PC-9 (cell line): ENCODE measurements at regions of chr1 and their contacts with region 1.

Region 1: GRCh38 chr1:244302889-244303613 is 148.7 kb downstream of the ADSS2 start:
- DNase-seq: peak; percentile 84 to 92
- H3K4me3 ChIP-seq: no peak overlapping the region
- H3K27ac ChIP-seq: peak overlapping the region; percentile 69
- H3K4me1 ChIP-seq: peaks cover 39% of the 10 kb centered on the region
- H3K27me3 ChIP-seq: no peaks in the 10 kb centered on the region
- CTCF ChIP-seq: no peak

Region 2: GRCh38 chr1:243343970-243344937 is 958.8 kb before region 1 on chr1:
- CTCF ChIA-PET with region 1: interaction called, 7 read pairs
- POLR2A ChIA-PET with region 1: no interaction called
- intact Hi-C with region 1: loop called (anchors 1 kb)
- DNase-seq: peak in 1 of 2 experiments; percentile 48
- H3K4me3 ChIP-seq: no peak overlapping the region
- H3K27ac ChIP-seq: no peak overlapping the region
- H3K4me1 ChIP-seq: no peaks in the 10 kb centered on the region
- H3K27me3 ChIP-seq: no peaks in the 10 kb centered on the region
- CTCF ChIP-seq: peak; percentile 87

Region 3: DNA sequence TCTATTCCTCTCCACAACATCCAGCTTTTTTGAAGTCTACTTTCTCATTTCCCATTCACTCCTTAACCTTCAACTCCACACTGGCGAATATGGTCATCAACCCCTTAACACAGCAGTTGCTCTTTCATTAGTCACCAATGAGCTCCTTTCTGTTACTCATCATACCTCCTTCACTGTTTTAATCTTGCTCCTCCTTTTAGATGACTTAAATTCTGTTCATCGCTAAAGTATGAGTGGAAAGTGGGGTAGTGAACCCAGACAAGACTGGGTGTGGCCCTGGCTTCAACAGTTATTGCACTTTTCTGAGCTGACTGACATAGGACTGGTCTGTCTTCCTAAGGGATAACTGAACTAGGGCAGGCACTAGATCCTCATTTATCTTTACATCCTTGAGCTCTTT is 504.3 kb before region 1 on chr1:
- CTCF ChIA-PET with region 1: no interaction called
- POLR2A ChIA-PET with region 1: no interaction called
- intact Hi-C with region 1: no loop called
- DNase-seq: peak; percentile 31 to 47
- H3K4me3 ChIP-seq: no peak overlapping the region
- H3K27ac ChIP-seq: peak overlapping the region; percentile 20
- H3K4me1 ChIP-seq: peaks cover 14% of the 10 kb centered on the region
- H3K27me3 ChIP-seq: no peaks in the 10 kb centered on the region
- CTCF ChIP-seq: no peak

Region 4: GRCh38 chr1:244265507-244265906 is 37.5 kb before region 1 on chr1:
- CTCF ChIA-PET with region 1: no interaction called
- POLR2A ChIA-PET with region 1: no interaction called
- intact Hi-C with region 1: no loop called
- DNase-seq: no peak
- H3K4me3 ChIP-seq: no peak overlapping the region
- H3K27ac ChIP-seq: no peak overlapping the region
- H3K4me1 ChIP-seq: no peaks in the 10 kb centered on the region
- H3K27me3 ChIP-seq: no peaks in the 10 kb centered on the region
- CTCF ChIP-seq: no peak

Region 5: DNA sequence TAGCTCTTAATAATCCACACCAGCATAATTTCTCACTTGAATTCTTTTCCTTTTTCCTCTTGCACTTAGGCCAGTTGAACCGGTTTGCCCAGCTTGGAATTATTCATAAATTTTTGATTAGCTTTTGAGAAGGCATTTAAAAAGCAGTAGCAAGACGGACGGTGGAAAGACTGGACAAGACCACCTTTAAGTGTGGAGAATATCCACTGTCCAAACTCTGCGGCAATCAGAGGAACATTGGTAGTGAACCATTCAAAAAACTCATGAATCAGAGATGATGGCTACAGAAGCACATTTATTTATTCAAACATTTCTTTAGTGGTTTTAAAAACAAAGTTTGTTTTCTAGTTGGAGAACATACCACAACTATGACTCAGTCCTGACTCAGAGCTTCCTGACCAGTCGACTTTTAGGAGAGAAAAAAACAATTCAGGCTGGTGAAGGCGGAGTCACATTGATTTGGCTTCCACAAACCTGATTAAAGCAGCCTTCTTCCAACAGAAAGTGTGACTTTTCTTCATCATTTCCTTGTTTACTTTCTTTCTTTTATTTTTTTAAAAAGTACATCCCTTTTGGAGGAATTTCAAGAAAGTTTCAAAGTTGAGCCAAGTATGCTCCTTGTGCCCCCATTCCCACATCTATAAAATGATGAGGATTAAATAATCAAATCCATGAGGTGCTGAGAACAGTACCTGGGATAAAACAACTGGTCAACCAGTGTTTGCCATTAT is 19.9 kb after region 1 on chr1:
- CTCF ChIA-PET with region 1: no interaction called
- POLR2A ChIA-PET with region 1: interaction called, 12 read pairs
- intact Hi-C with region 1: loop called (anchors 1 kb)
- DNase-seq: peak; percentile 68 to 96
- H3K4me3 ChIP-seq: peak overlapping the region; percentile 52
- H3K27ac ChIP-seq: peak overlapping the region; percentile 96
- H3K4me1 ChIP-seq: peaks cover 45% of the 10 kb centered on the region
- H3K27me3 ChIP-seq: no peaks in the 10 kb centered on the region
- CTCF ChIP-seq: no peak

Region 6: GRCh38 chr1:244353551-244354091 is 50.6 kb after region 1 on chr1:
- CTCF ChIA-PET with region 1: no interaction called
- POLR2A ChIA-PET with region 1: no interaction called
- intact Hi-C with region 1: loop called (anchors 5 kb)
- DNase-seq: peak; percentile 73 to 91
- H3K4me3 ChIP-seq: no peak overlapping the region
- H3K27ac ChIP-seq: peak overlapping the region; percentile 78
- H3K4me1 ChIP-seq: peaks cover 16% of the 10 kb centered on the region
- H3K27me3 ChIP-seq: no peaks in the 10 kb centered on the region
- CTCF ChIP-seq: no peak

Region 7: GRCh38 chr1:244391761-244392160 is 88.7 kb after region 1 on chr1:
- CTCF ChIA-PET with region 1: interaction called, 7 read pairs
- POLR2A ChIA-PET with region 1: no interaction called
- intact Hi-C with region 1: loop called (anchors 5 kb)
- DNase-seq: peak; percentile 35 to 76
- H3K4me3 ChIP-seq: no peak overlapping the region
- H3K27ac ChIP-seq: peak overlapping the region; percentile 45; the same call in 1 of the 2 replicates
- H3K4me1 ChIP-seq: peaks cover 14% of the 10 kb centered on the region
- H3K27me3 ChIP-seq: no peaks in the 10 kb centered on the region
- CTCF ChIP-seq: no peak

Region 8: GRCh38 chr1:244414543-244414942 is 111.5 kb after region 1 on chr1:
- CTCF ChIA-PET with region 1: interaction called, 14 read pairs
- POLR2A ChIA-PET with region 1: no interaction called
- intact Hi-C with region 1: no loop called
- DNase-seq: peak in 1 of 2 experiments; percentile 47
- H3K4me3 ChIP-seq: no peak overlapping the region
- H3K27ac ChIP-seq: no peak overlapping the region
- H3K4me1 ChIP-seq: no peaks in the 10 kb centered on the region
- H3K27me3 ChIP-seq: no peaks in the 10 kb centered on the region
- CTCF ChIP-seq: no peak